H1 (cell line): ENCODE measurements at regions of chr12 and their contacts with region 1.

Region 1: DNA sequence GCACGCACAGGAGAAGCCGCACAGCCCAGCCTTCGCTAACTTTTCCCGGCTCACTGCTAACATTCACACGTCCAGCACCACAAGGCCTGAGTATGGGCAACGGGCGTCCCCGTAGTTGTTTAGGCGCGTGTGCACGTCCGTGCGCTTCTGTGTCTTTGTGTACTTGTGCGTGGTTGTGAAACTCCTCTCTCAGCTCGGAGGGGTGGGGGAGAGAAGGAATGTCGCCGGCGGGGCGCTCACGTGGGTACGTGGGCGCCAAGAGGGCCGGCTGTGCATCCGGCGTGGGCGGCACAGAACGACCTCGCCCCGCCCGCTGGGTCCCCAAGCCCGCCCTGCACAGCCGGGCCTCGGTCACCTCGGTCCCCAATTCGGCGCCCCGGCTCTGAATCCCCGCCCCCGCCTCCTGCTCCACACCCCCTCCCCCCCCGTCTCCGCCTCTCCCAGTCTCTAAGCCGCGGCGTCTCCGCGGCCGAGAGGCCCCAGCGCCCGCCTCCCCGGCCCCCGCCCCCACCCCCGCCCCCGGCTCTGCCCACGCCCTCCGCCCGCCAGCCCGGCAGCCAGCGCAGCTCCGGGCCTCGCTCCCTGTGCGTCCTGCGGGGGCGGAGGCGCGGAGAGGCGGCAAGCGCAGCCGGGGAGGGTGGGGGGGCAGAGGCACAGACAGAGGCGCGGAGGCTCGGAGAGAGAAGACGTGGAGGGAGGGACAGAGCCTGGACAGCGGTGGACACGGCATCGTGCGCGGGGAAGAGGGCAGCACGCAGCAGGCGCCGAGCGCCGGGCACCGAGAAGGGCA is at the start of gene NAB2:
- DNase-seq: peak in 1 of 2 experiments; percentile 87
- H3K4me3 ChIP-seq: peak within 1 kb of the TSS; percentile 92 to 96 (median 93)
- H3K27ac ChIP-seq: peak within 1 kb of the TSS; percentile 84
- H3K4me1 ChIP-seq: peaks cover 0 to 25% (median 15%) of the 10 kb centered on the region in 4 experiments; a peak in 6 of 7 replicates
- H3K27me3 ChIP-seq: no peaks in the 10 kb centered on the region
- CTCF ChIP-seq: no peak
- EP300 ChIP-seq: no peak
- POLR2A ChIP-seq: 0 out of 3 replicates have a peak, but pooled peaks of 1 of the 2 experiments have one; percentile 3
- RAD21 ChIP-seq: no peak
- total RNA-seq, gene NAB2: 20.6 and 20.9 TPM in 2 replicates

Region 2: GRCh38 chr12:56941299-56942017 is 147.2 kb before region 1 on chr12:
- CTCF ChIA-PET with region 1: no interaction called
- POLR2A ChIA-PET with region 1: no interaction called
- DNase-seq: peak in 1 of 2 experiments; percentile 23
- H3K4me3 ChIP-seq: no peak overlapping the region
- H3K27ac ChIP-seq: no peak overlapping the region
- H3K4me1 ChIP-seq: no peaks in the 10 kb centered on the region
- H3K27me3 ChIP-seq: no peaks in the 10 kb centered on the region
- CTCF ChIP-seq: no peak
- EP300 ChIP-seq: no peak
- POLR2A ChIP-seq: no peak
- RAD21 ChIP-seq: no peak

Region 3: GRCh38 chr12:57012600-57013465 is 75.8 kb before region 1 on chr12:
- CTCF ChIA-PET with region 1: interaction called, 16 read pairs
- POLR2A ChIA-PET with region 1: interaction called, 7 read pairs
- DNase-seq: no peak
- H3K4me3 ChIP-seq: no peak overlapping the region
- H3K27ac ChIP-seq: no peak overlapping the region
- H3K4me1 ChIP-seq: peaks cover 6 to 20% (median 15%) of the 10 kb centered on the region in 4 experiments
- H3K27me3 ChIP-seq: no peaks in the 10 kb centered on the region
- CTCF ChIP-seq: peak; percentile 41 to 59 (median 46)
- EP300 ChIP-seq: no peak
- POLR2A ChIP-seq: no peak
- RAD21 ChIP-seq: peak; percentile 60 to 62

Region 4: DNA sequence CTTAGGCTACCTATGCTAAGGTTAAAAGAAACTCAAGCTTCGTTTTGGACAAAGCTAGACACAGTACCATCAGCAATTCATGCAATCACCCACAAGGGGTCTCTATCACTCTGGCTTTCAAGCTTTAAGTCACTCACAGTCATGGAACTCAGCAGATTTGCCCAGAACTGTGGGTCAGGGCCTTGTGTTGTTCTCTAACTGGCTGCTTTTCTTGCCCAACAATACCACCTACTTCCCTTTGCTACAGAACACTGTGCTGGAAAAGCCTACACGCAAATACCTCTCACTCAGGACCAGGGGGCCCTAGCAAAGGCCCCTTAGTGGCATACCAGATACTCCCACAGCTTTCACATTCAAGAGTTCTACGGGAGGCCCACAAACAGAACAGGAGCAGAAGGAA is 19.1 kb before region 1 on chr12:
- CTCF ChIA-PET with region 1: interaction called, 206 read pairs
- POLR2A ChIA-PET with region 1: interaction called, 127 read pairs
- DNase-seq: no peak
- H3K4me3 ChIP-seq: no peak overlapping the region
- H3K27ac ChIP-seq: no peak overlapping the region
- H3K4me1 ChIP-seq: no peaks in the 10 kb centered on the region
- H3K27me3 ChIP-seq: no peaks in the 10 kb centered on the region
- CTCF ChIP-seq: peak in 2 of 3 experiments; percentile 90 to 94; a peak in 3 of 4 replicates
- EP300 ChIP-seq: no peak
- POLR2A ChIP-seq: no peak
- RAD21 ChIP-seq: peak; percentile 95 to 97

Region 5: GRCh38 chr12:57135527-57136326 is 47.1 kb after region 1 on chr12:
- CTCF ChIA-PET with region 1: interaction called, 4 read pairs
- POLR2A ChIA-PET with region 1: interaction called, 10 read pairs
- DNase-seq: no peak
- H3K4me3 ChIP-seq: peak overlapping the region in 1 of 4 experiments; percentile 47; a peak in 4 of 8 replicates
- H3K27ac ChIP-seq: peak overlapping the region; percentile 78
- H3K4me1 ChIP-seq: peaks cover 22 to 53% (median 30%) of the 10 kb centered on the region in 4 experiments
- H3K27me3 ChIP-seq: no peaks in the 10 kb centered on the region
- CTCF ChIP-seq: no peak
- EP300 ChIP-seq: no peak
- POLR2A ChIP-seq: no peak; a peak in 1 of 3 replicates
- RAD21 ChIP-seq: no peak

Region 6: DNA sequence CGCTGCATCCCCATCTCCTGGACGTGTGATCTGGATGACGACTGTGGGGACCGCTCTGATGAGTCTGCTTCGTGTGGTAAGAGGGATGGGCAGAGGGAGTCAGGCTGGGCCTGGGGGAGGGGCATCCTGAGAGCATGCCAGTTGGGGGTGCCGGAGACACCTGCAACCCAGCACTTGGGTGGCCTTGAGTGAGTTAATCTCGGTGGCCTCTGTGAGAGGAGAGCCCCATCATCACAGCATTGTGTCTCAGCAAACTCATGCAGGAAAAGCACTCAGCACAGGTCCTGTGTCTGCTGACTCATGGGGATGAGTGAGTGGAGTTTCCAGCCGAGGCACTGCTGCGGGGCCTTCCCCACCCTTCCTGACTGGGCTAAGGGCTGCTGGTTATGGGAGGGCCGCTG is 78.3 kb after region 1 on chr12:
- CTCF ChIA-PET with region 1: no interaction called
- POLR2A ChIA-PET with region 1: no interaction called
- DNase-seq: no peak
- H3K4me3 ChIP-seq: no peak overlapping the region
- H3K27ac ChIP-seq: no peak overlapping the region
- H3K4me1 ChIP-seq: no peaks in the 10 kb centered on the region
- H3K27me3 ChIP-seq: no peaks in the 10 kb centered on the region
- CTCF ChIP-seq: no peak
- EP300 ChIP-seq: no peak
- POLR2A ChIP-seq: no peak
- RAD21 ChIP-seq: no peak